Head of caudate nucleus (tissue), 42 donors: ENCODE measurements at regions of chr6 and their contacts with region 1.

Region 1: DNA sequence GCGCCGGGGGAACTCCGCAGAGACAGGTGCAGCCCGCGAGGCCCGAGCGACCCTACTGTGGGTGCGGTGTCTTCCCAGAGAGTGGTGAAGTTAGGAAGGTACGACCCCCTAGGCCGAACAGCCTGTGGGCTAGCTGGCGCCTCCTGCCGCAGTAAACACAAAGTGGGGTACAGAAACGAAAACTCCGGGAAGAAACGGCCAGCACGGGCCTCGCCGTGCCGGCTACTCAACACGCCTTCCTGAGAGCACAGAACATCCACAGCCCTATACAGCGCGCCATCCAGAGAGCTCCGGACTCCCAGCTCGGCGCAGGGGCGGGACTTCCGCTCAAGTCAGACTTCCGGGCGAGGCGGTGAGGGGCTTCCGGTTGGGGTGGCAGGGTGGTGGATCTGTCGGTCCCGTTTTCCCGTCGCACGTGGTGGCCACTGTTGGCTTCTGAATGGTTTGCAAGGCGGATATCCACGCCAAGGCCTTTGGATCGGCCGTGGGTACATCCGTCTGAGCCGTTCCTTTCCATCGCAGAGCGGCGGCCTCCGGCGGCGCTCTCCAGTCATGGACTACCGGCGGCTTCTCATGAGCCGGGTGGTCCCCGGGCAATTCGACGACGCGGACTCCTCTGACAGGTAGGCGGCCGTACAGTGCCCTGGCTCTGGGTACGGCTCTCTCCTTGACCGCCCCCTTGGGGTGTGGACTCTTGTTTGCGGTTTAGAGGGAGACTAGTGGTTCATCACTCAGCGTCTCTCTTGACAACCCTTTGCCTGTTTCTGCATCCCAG is at the starts of genes CAGE1 and RIOK1:
- DNase-seq: peak; percentile 90 to 98 (median 95)

Region 2: DNA sequence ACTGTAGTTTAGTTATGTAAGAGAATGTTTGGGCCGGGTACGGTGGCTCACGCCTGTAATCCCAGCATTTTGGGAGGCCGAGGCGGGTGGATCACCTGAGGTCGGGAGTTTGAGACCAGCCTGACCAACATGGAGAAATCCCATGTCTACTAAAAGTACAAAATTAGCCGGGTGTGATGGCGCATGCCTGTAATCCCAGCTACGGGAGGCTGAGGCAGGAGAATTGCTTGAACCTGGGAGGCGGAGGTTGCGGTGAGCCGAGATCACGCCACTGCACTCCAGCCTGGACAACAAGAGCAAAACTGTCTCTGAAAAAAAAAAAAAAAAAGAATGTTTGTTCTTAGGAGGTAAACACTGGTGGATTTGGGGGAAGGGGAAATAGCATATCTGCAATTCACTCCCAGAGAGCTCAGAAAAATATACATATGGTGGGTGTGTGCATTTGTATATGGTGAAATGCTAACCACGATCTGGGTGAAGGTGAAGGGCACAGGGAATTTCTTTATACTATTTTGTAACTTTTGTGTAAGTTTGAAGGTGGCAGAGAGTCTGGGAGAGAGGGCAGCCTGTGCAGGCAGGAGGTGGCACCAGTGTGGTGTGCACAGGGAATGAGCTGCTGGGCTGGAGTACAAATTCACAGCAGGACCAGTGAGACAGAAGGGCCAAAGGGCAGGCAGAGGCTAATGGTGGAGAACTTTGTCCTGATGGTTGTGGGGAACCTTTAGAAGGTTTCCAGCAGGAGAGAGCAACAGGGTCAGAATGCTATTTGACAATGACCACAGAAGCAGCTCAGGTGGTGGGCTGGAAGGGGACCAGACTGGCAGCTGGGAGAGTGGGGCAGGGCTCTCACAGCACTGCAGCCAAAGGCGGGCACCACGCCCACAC is 119.1 kb before region 1 on chr6:
- intact Hi-C with region 1: no loop called
- DNase-seq: peak in 5 of 42 donors; percentile 2 to 30 (median 21)

Region 3: DNA sequence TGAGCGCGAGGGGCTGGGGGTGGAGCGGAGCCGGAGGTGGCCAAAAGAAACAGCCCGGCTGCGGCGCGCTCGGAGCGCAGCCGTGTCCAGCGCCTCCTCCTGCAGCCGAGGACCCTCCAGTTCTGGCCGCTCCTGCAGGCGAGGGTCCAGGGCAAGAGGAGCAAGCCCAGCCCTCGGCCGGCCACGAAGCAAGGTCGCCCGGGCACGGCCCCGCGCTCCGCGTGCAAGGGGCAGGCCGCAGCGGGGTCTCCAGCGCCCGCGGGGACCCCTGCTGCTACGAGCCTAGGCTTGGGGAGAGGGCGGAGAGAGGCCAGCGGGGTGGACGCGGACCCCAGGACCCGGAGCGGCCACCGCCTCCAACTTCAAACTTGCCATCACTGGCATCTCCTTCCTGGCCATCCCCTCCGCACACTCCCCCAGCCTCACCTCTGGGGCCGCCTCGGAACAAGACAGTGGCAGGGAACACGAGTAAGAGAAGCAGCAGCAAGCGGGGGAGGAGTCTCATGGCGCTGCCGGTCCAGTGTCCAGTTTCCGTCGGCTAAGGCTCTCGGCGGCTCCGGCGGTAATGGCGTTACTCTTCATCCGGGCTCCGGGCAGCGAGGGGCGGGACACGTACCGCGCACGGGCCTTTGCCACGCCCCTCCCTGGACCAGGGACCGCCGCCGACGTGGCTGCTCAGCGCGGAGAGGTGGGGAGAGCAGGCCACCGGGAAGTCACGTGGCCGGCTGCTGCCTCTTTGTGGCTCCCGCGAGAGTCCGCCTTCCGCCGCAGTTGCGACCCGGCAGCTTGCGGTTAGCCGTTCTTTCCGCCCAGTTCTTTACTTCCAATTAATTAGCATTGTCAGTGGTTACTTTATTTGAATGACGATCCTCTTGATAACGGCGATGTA is 76.8 kb before region 1 on chr6 and contains the start of gene SSR1:
- intact Hi-C with region 1: loop called (anchors 5 kb)
- DNase-seq: peak; percentile 94 to 100 (median 99)

Region 4: GRCh38 chr6:7589949-7590917 is 200.6 kb after region 1 on chr6 and contains the start of gene SNRNP48:
- intact Hi-C with region 1: loop called (anchors 5 kb)
- DNase-seq: peak; percentile 87 to 97 (median 94)